Activated T-helper 1 cell treated with anti-CD3 and anti-CD28 coated beads, Interleukin-12 subunit alpha, Interleukin-12 subunit beta, Interleukin-2, Interleukin-4 antibody, amounts not matched to agents 30 ng/mL and 10 ng/mL and 1 ng/mL, durations not matched to agents 14 hours and 24 hours and 36 hours (primary cell): ENCODE measurements at regions of chr3 and their contacts with region 1.

Region 1: DNA sequence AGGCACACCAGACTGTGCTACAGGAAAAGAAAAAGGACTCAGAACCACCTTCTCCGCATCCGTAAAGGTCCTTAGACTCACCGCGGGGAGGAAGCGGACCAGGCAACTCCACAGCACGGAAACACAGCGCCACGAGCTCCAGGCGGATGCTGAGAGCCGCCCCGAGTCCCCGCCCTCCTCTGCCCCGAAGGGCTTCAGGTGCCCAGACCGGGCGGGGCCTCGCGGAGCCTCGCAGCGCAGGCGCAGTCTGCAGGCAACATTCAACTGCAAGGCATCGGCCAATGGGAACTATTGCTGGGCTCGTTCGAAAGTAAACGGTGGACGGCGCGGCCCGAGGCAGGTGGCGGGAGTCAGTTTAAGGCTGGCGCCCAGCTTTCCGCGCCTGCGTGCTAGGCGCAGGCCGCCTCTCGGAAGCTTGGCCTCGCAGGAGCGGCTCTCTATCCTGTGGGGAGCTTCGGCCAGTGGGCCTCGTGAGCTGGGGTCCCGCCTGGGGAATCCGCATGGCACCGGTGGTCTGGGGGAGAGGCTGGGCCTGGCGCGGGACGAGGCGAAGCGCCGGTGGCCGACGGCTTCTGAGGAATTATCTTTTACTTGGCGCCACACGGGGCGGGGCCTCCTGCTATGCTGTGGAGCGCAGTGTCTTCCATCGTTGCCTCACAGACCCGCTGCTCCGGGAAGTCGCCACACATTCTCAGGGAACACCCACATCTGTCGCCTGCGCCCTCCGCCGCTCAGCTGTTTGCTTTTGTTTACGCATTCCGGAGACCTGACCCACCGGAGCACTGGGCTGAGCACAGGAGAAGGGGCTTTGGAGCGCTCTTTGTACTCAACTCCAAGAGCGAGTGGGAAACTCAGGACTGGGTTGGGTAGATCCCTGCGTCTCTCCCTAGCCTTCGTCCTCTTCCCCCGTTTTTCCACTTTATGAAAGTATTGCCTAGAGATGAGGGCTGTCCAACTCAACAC is at the start of gene TRIM59:
- DNase-seq: peak; percentile 97
- H3K4me3 Mint-ChIP-seq: peak within 1 kb of the TSS; percentile 95
- H3K27ac Mint-ChIP-seq: peak within 1 kb of the TSS; percentile 95
- H3K4me1 Mint-ChIP-seq: peaks cover 29% of the 10 kb centered on the region
- H3K27me3 Mint-ChIP-seq: peaks cover 6% of the 10 kb centered on the region
- total RNA-seq, gene TRIM59: 33.1 and 33.2 TPM in 2 replicates

Region 2: DNA sequence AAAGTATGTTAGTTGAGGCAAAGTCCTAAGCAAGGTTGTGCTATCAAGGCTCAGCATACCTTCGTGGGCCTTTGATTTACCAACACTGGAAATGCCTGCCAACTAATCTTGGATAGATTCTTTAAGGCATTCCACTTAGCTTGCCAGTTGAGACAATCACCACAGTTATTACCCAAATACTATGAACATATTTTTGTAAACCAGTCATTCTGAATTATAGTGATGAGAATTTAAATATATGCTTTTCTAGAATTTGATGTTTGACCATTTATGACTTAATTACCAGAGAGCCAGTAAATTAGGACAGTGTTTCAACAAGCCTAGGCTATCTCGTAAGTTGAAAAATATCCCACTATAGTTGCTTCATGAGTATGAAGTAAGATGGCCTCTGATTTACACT is 15.8 kb before region 1 on chr3:
- intact Hi-C with region 1: loop called (anchors 2 kb)
- DNase-seq: no peak
- H3K4me3 Mint-ChIP-seq: no peak overlapping the region
- H3K27ac Mint-ChIP-seq: no peak overlapping the region
- H3K4me1 Mint-ChIP-seq: peaks cover 29% of the 10 kb centered on the region
- H3K27me3 Mint-ChIP-seq: no peaks in the 10 kb centered on the region

Region 3: DNA sequence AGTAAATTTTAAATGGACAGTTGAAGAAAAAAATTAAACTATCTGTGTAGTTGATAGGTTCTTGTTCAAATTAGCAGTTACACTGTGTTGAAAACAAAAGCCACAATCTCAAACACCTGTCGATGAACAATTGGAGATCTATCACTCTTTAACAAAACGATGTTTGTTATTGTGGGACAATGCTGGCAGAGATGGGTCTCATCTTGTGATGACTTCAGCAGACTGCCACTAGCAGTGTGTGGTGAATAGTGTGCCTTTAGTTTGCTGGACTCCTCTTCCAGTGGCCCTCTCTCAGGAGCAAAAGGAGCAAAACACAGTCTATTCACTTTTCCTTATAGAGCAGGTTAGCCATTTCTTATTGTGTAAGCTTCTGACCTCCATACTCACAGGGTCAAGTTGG is 14.4 kb after region 1 on chr3:
- intact Hi-C with region 1: no loop called
- DNase-seq: no peak
- H3K4me3 Mint-ChIP-seq: no peak overlapping the region
- H3K27ac Mint-ChIP-seq: no peak overlapping the region
- H3K4me1 Mint-ChIP-seq: no peaks in the 10 kb centered on the region
- H3K27me3 Mint-ChIP-seq: peaks cover 32% of the 10 kb centered on the region

Region 4: DNA sequence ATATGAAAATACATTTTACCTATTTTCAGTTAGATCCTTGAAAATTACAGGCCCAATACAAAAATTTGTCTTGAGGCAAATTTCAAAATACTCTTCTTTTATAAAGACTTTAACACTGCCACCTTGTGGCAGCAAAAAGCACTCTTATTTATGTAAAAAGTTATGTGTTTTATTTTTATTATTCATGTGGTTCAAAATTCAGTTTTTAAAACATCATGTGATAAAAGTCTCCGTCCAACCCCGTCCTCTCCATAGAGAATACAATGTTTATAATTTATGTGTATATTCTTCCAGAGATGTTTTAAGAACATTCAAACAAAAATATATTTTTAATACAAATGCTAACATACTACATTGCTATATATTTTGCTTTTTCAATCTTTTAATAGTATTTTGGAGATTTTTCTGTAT is 36.5 kb after region 1 on chr3:
- intact Hi-C with region 1: loop called (anchors 1 kb)
- DNase-seq: no peak
- H3K4me3 Mint-ChIP-seq: peak overlapping the region; percentile 78
- H3K27ac Mint-ChIP-seq: no peak overlapping the region
- H3K4me1 Mint-ChIP-seq: peaks cover 5% of the 10 kb centered on the region
- H3K27me3 Mint-ChIP-seq: peaks cover 2% of the 10 kb centered on the region

Region 5: GRCh38 chr3:160754855-160755747 is 305.2 kb after region 1 on chr3:
- intact Hi-C with region 1: loop called (anchors 1 kb)
- DNase-seq: peak; percentile 84
- H3K4me3 Mint-ChIP-seq: peak overlapping the region; percentile 93
- H3K27ac Mint-ChIP-seq: peak overlapping the region; percentile 98
- H3K4me1 Mint-ChIP-seq: peaks cover 37% of the 10 kb centered on the region
- H3K27me3 Mint-ChIP-seq: peaks cover 40% of the 10 kb centered on the region

Region 6: GRCh38 chr3:160801386-160802118 is 351.6 kb after region 1 on chr3:
- intact Hi-C with region 1: loop called (anchors 2 kb)
- DNase-seq: peak; percentile 70
- H3K4me3 Mint-ChIP-seq: peak overlapping the region; percentile 64
- H3K27ac Mint-ChIP-seq: peak overlapping the region; percentile 85
- H3K4me1 Mint-ChIP-seq: peaks cover 36% of the 10 kb centered on the region
- H3K27me3 Mint-ChIP-seq: peaks cover 12% of the 10 kb centered on the region